Brain microvascular endothelial cell (primary cell): ENCODE measurements at regions of chr5 and their contacts with region 1.

Region 1: DNA sequence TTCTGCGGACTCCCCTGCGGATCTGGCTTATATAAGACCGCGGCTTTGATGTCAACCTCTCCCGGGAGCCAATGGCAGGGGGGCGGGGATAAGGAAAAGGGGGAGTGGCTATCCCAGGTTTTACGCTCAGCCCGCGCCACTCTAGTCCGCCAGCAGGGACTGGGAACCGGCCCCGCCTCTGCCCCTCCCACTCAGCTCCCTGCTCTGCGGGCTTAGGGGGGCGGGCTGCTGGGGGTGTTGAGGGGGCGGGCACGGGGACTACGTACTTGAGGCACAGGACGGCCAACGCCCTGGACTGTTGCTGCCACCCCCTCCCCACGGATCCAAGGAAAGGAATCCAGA is at the start of gene HAND1:
- DNase-seq: no peak
- H3K4me3 ChIP-seq: no peak within 1 kb of the TSS
- H3K27ac ChIP-seq: no peak within 1 kb of the TSS
- H3K27me3 ChIP-seq: peaks cover 96% of the 10 kb centered on the region
- CTCF ChIP-seq: no peak

Region 2: GRCh38 chr5:154179846-154180710 is 298.1 kb before region 1 on chr5:
- in situ Hi-C with region 1: no loop called
- DNase-seq: peak; percentile 52
- H3K4me3 ChIP-seq: no peak overlapping the region
- H3K27ac ChIP-seq: no peak overlapping the region
- H3K27me3 ChIP-seq: no peaks in the 10 kb centered on the region
- CTCF ChIP-seq: peak; percentile 89

Region 3: DNA sequence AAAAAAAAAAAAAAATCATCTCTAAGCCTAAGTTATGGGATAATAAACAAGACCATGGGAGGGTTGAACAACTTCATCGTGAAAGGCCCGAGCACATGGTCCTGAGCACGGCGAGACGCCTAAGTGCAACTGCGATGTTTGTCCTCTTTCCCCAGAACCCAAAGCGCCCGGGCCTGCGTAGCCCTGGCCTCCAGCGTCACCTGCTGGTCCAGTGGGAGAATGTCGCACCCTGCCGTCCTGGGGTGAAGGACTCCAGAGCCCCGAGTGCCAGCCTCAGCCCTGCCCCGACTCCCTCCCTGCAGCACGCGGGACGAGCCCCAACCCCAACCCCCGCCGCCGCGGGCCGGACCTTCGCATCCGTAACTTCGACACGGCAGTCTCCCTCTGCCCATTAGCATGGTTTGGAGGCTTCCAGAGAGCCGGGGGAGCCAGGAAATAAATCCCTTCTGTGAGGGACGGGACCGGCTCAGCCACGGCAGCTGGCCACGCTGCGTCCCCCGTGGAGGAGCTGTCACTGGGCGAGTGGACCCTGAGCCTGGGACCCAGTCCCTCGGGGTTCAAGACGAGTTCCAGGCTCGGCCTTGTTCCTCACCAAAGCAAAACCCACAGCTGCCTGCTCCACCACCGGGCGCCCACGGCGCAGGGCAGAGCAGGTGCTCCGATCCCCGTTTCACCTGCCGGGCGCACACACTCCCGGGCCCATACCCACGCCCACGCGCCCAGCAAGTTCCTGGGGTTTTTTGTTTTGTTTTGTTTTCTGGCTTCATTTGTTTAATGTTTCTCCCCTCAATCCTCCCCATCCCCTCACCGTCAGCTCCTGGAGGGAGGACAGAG is 132.3 kb after region 1 on chr5:
- in situ Hi-C with region 1: loop called (anchors 25 kb)
- DNase-seq: peak; percentile 57
- H3K4me3 ChIP-seq: peak overlapping the region; percentile 9
- H3K27ac ChIP-seq: no peak overlapping the region
- H3K27me3 ChIP-seq: peaks cover 38% of the 10 kb centered on the region
- CTCF ChIP-seq: peak; percentile 93

Region 4: GRCh38 chr5:154654486-154655371 is 176.5 kb after region 1 on chr5:
- in situ Hi-C with region 1: no loop called
- DNase-seq: no peak
- H3K4me3 ChIP-seq: no peak overlapping the region
- H3K27ac ChIP-seq: no peak overlapping the region
- H3K27me3 ChIP-seq: no peaks in the 10 kb centered on the region
- CTCF ChIP-seq: no peak